Ovary (tissue), 10 donors: ENCODE measurements at regions of chr1 and their contacts with region 1.

Region 1: DNA sequence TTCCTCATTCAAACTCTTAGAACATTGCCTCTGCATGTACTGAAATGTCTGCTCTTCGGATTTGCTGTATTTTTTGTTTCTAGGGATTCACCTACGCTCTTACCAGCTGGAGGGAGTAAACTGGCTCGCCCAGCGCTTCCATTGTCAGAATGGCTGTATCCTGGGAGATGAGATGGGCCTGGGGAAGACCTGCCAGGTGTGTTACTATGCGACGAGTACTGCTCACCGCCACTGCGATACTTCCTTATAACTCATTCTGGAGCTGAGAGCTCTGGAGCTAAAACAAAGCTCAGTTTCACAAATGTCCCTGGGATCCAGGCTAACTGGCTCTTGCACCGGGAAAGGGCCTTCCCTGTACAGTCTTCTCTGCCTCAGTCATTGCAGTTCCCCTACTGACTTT is 10.1 kb downstream of the CHD1L start:
- DNase-seq: no peak
- H3K4me3 ChIP-seq: no peak overlapping the region
- H3K27ac ChIP-seq: no peak overlapping the region
- H3K4me1 ChIP-seq: no peaks in the 10 kb centered on the region
- H3K27me3 ChIP-seq: no peaks in the 10 kb centered on the region
- CTCF ChIP-seq: no peak
- EP300 ChIP-seq: no peak
- POLR2A ChIP-seq: no peak

Region 2: DNA sequence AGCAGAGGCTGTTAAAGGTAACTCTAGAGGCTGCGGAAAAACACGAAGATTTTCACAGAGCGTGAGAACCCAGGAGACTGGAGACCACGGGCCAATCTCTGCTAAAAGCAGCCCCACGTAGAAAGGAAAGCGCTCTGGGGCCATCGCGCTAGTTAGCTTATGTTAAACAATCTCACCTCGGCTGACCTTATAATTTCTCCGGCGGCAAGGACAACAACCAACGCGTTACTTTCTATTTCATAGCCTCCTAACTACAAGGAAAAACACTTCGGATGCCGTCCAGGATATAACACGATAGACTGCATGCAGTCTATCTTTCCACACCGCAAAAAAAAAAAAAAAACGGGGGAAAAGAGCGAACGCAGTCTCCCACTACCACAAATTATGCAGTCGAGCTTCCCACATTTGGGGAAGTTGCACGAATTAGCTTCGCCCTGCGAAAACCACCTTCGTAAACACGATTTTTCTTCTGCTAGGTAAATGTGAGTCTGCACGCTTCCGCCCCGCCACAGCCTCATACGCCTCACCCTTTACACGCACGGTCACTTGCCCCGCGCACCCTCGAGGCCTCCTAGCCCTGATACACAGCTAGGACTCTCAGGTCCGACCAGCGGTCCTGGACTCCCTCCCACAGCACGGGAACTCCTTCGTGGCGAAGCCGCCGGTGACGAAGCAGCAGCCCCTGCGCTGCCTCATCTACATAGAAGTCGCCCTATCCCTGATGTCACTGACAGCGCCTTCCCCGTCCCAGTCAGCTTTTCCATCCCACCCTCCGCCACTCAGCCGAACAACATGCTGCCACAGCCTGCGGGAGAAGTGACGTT is 168.1 kb before region 1 on chr1:
- intact Hi-C with region 1: loop called in 1 of 4 experiments (anchors 5 kb)
- DNase-seq: peak in 4 of 5 donors; percentile 17 to 50 (median 40)
- H3K4me3 ChIP-seq: peak overlapping the region; percentile 42
- H3K27ac ChIP-seq: no peak overlapping the region
- H3K4me1 ChIP-seq: peaks cover 4% of the 10 kb centered on the region
- H3K27me3 ChIP-seq: no peaks in the 10 kb centered on the region
- CTCF ChIP-seq: no peak
- EP300 ChIP-seq: no peak
- POLR2A ChIP-seq: no peak

Region 3: DNA sequence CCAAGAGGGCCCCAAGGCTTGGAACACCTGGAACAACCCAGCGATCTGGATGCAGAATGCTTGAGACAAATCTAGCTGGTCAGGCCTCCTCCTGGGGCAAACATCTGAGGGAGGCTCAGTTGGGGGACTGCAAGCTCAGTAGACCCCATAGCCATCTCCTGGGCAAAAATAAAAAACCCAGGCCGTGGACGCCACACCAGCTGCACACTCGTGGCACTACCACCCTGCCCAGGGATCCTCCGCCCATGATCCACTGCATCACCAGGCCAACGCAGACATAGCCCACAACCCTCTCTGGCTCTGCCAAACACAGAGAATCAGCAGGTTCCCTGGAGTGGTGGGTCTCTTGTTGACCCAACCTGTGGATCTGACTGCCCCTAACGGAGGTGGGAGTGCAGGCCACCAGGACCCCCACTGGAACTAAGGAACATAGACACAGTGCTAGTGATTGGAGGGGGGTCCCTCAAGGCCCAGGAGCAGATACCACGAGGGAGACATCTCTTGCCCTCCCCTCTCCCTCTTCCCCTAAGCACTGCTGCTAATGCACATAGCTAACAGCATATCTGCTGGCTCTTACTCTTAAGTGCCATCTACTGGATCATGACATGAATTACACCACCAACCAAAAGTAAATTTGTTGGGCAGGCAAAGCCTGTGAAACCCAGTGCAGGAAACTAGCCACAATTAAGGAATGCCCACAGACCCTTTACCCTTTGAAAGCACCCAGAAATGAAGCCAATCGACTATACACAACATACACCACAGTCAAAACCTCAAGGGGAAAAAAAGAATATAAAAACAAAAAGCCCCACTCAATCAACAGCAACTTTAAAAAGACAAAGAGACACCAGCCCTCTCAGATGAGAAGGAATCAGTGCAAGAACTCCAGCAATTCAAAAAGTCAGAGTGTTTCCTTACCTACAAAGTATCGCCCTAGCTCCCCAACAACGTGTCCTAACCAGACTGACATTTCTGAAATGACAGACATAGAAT is 137.3 kb after region 1 on chr1:
- intact Hi-C with region 1: no loop called
- DNase-seq: no peak
- H3K4me3 ChIP-seq: no peak overlapping the region
- H3K27ac ChIP-seq: no peak overlapping the region
- H3K4me1 ChIP-seq: no peaks in the 10 kb centered on the region
- H3K27me3 ChIP-seq: no peaks in the 10 kb centered on the region
- CTCF ChIP-seq: no peak
- EP300 ChIP-seq: no peak
- POLR2A ChIP-seq: no peak